Lower leg skin (tissue), 4 donors: ENCODE measurements at regions of chr3 and their contacts with region 1.

Region 1: GRCh38 chr3:17431004-17431403 is 311.4 kb downstream of the TBC1D5 start:
- DNase-seq: no peak
- H3K4me3 ChIP-seq: no peak overlapping the region
- CTCF ChIP-seq: no peak
- POLR2A ChIP-seq: no peak

Region 2: GRCh38 chr3:17831366-17831765 is 400.4 kb after region 1 on chr3:
- intact Hi-C with region 1: loop called (anchors 5 kb)
- DNase-seq: no peak
- H3K4me3 ChIP-seq: no peak overlapping the region
- CTCF ChIP-seq: no peak
- POLR2A ChIP-seq: no peak

Region 3: DNA sequence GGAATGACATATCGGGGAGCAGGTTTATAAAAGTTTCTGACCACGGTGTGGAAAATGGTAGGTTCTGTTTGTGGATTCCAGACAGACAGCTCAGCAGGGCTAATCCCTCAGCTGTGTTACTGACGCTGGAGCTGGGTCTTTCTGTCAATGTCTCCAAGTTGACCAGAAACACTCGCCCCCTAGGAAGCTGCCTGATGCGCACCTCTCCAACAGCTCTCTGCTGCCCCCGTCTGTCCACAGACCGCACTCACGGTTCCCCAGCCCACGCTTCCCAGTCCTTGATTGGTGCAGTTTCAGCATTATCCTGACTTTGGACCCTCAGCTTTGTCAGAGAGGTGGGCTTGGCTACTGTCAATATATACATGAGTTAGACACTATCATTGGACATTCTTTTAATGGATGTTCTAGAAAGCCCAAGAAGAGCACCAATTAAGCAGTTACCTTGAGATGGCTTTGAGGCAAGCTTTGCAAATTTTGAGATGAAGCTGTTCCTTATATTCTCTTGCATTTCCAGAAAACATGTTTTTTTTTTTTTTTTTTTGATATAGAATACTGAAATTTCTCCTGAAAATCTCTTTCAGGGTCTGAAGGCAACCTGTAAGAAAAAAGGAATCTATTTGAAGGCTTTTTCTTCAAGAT is 410.3 kb after region 1 on chr3:
- intact Hi-C with region 1: loop called (anchors 5 kb)
- DNase-seq: peak; percentile 59 to 94
- H3K4me3 ChIP-seq: no peak overlapping the region
- CTCF ChIP-seq: peak in 1 of 3 donors; percentile 58
- POLR2A ChIP-seq: no peak